CD8-positive, alpha-beta T cell (primary cell): ENCODE measurements at regions of chr21 and their contacts with region 1.

Region 1: DNA sequence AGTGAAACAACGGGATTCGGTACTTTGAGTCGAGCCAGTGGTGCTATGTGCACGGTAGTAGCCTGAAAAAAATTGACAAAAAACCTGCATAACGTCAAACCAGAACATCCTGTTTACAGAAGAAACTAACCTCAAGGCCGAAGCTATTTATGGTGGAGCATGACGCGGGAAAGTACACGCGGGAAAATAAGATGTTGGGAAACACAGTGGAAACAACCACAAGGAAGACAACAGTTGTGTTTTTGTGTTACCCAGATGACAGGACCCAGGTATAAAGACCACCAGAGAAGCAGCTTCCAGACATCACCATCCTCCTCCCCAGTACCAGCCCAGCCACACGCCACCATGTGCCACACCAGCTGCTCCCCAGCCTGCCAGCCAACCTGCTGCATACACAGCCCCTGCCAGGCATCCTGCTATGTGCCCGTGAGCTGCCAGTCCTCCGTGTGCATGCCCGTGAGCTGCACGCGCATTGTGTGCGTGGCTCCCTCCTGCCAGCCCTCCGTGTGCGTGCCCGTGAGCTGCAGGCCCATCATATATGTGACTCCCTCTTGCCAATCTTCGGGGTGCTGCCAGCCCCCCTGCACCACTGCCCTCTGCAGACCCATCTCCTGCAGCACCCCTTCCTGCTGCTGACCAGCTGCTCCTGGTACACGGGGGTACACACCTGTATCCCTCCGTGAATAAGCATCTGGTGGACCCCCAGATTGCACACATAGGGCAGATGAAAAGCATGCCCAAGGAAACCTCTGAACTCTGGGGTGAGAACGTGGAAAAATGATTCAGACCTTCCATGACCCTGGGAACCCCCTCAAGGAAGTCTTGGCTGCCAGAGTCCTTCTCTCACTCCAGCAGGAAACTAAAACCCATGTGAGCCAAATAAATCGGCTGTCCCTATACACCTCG is at the start of gene KRTAP12-3:
- DNase-seq: peak; percentile 45 to 95 (median 70)
- ATAC-seq: peak; percentile 64
- H3K4me3 ChIP-seq: peak within 1 kb of the TSS; percentile 9 to 31
- H3K4me3 Mint-ChIP-seq: peak within 1 kb of the TSS; percentile 66
- H3K27ac ChIP-seq: peak within 1 kb of the TSS; percentile 63 to 88
- H3K27ac Mint-ChIP-seq: peak within 1 kb of the TSS; percentile 96
- H3K4me1 ChIP-seq: peaks cover 65% of the 10 kb centered on the region
- H3K4me1 Mint-ChIP-seq: peaks cover 68% of the 10 kb centered on the region
- H3K27me3 ChIP-seq: no peaks in the 10 kb centered on the region
- H3K27me3 Mint-ChIP-seq: no peaks in the 10 kb centered on the region
- CTCF ChIP-seq: no peak
- total RNA-seq, gene KRTAP12-3: 1.3 TPM in 1 of 2 experiments, not detected in the other

Region 2: GRCh38 chr21:44461464-44462001 is 196.4 kb before region 1 on chr21:
- CTCF ChIA-PET with region 1: no interaction called
- POLR2A ChIA-PET with region 1: no interaction called
- intact Hi-C with region 1: no loop called
- DNase-seq: no peak
- ATAC-seq: no peak
- H3K4me3 ChIP-seq: no peak overlapping the region
- H3K4me3 Mint-ChIP-seq: no peak overlapping the region
- H3K27ac ChIP-seq: no peak overlapping the region
- H3K27ac Mint-ChIP-seq: no peak overlapping the region
- H3K4me1 ChIP-seq: no peaks in the 10 kb centered on the region
- H3K4me1 Mint-ChIP-seq: no peaks in the 10 kb centered on the region
- H3K27me3 ChIP-seq: no peaks in the 10 kb centered on the region
- H3K27me3 Mint-ChIP-seq: no peaks in the 10 kb centered on the region
- CTCF ChIP-seq: no peak

Region 3: DNA sequence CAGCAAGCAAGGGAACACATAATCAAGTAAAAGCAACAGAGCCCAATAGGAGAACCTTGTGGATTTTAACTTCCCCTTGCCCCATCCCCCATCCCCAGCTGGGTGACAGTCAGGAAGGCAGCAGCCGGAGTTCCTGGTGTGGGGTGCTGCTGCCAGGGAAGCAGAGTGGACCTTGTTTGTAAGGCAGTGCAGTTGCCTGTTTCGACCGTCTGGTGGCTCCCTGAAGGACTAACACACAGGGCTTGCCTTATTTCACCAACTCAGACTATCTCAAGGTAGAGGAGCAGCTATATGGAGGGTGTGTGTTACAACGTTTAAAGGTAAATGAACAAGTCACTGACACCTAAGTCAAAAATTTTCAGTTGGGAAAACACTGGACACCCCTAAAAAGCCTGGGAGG is 39.4 kb before region 1 on chr21:
- CTCF ChIA-PET with region 1: no interaction called
- POLR2A ChIA-PET with region 1: interaction called, 40 read pairs
- intact Hi-C with region 1: loop called (anchors 1 kb)
- DNase-seq: peak in 2 of 9 experiments; percentile 44 to 51
- ATAC-seq: peak; percentile 46
- H3K4me3 ChIP-seq: peak overlapping the region; percentile 6 to 12
- H3K4me3 Mint-ChIP-seq: peak overlapping the region; percentile 35
- H3K27ac ChIP-seq: peak overlapping the region; percentile 33 to 85
- H3K27ac Mint-ChIP-seq: peak overlapping the region; percentile 92
- H3K4me1 ChIP-seq: peaks cover 45% of the 10 kb centered on the region
- H3K4me1 Mint-ChIP-seq: peaks cover 57% of the 10 kb centered on the region
- H3K27me3 ChIP-seq: no peaks in the 10 kb centered on the region
- H3K27me3 Mint-ChIP-seq: no peaks in the 10 kb centered on the region
- CTCF ChIP-seq: no peak

Region 4: DNA sequence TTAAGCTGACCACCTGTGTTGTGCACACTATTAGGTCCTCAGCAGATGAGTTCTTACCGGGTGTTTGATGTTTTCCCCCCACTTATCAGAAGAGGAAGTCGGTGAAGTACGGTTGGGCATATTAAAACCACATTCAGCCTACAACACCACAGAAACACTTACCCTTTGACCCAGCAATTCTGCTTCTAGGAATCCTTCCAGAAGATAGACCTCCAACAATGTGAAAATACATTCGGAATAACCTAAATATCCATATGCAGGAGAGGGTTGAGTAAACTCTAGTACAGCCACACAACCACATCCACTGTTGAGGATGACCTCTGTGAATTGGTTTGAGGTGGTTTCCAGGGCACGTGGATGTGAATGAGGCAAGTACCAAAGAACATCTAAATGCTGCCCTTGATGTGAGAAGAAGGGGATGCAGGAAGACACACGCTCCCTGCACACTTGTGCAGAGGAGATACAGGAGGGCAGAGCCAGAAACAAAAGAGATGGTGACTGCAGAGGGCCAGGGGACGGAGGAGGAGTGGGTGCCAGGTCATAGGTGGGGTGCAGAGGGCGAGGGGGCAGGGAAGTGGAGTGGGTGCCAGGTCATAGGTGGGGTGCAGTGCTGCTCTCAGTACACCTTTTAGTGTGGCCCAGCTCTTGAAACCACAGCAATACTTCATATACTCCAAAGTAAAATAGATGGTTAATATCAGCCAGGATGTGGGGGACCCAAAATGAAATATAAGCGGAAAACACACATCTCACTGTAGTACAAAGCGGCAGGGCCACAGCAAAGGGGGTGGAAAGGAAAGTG is 429.3 kb after region 1 on chr21:
- CTCF ChIA-PET with region 1: no interaction called
- POLR2A ChIA-PET with region 1: no interaction called
- intact Hi-C with region 1: loop called in 1 of 2 experiments (anchors 5 kb)
- DNase-seq: peak in 3 of 9 experiments; percentile 47 to 68 (median 49)
- ATAC-seq: peak; percentile 53
- H3K4me3 ChIP-seq: peak overlapping the region in 1 of 2 experiments; percentile 2
- H3K4me3 Mint-ChIP-seq: peak overlapping the region; percentile 67
- H3K27ac ChIP-seq: no peak overlapping the region
- H3K27ac Mint-ChIP-seq: peak overlapping the region; percentile 49
- H3K4me1 ChIP-seq: peaks cover 75% of the 10 kb centered on the region
- H3K4me1 Mint-ChIP-seq: peaks cover 74% of the 10 kb centered on the region
- H3K27me3 ChIP-seq: no peaks in the 10 kb centered on the region
- H3K27me3 Mint-ChIP-seq: no peaks in the 10 kb centered on the region
- CTCF ChIP-seq: no peak